HEK293 (cell line): ENCODE measurements at regions of chr21 and their contacts with region 1.

Region 1: GRCh38 chr21:32834916-32835235 is 63.3 kb upstream of the PAXBP1 start:
- H3K4me3 ChIP-seq: no peak overlapping the region
- H3K27ac ChIP-seq: no peak overlapping the region
- H3K4me1 ChIP-seq: no peaks in the 10 kb centered on the region
- CTCF ChIP-seq: no peak

Region 2: GRCh38 chr21:33317145-33317544 is 482.3 kb after region 1 on chr21:
- CTCF ChIA-PET with region 1: interaction called, 13 read pairs
- POLR2A ChIA-PET with region 1: no interaction called
- H3K4me3 ChIP-seq: no peak overlapping the region
- H3K27ac ChIP-seq: no peak overlapping the region
- H3K4me1 ChIP-seq: no peaks in the 10 kb centered on the region
- CTCF ChIP-seq: no peak